OCI-LY7 (cell line): ENCODE measurements at regions of chr18 and their contacts with region 1.

Region 1: DNA sequence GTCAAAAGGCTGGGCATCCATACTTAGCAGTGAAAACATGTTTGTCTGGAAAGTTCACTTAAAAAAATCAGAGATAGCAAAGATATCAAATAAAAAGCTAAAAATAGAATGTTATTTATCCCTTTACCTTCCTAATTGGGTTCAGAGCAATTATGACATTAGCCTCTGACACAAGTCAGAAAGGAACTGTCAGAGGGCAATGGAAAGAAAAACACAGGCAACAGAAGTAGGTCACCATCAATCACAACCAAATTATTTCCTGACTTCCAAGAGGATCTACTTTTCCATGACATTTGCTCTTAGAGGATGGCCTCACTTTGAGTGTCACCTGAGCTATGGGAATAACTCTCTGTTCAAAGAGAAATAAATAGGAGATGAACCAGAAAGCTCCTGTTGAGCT is 27.5 kb downstream of the MYOM1 start:
- DNase-seq: no peak
- H3K4me3 ChIP-seq: no peak overlapping the region
- H3K27ac ChIP-seq: no peak overlapping the region
- H3K4me1 ChIP-seq: peaks cover 11% of the 10 kb centered on the region
- CTCF ChIP-seq: no peak

Region 2: DNA sequence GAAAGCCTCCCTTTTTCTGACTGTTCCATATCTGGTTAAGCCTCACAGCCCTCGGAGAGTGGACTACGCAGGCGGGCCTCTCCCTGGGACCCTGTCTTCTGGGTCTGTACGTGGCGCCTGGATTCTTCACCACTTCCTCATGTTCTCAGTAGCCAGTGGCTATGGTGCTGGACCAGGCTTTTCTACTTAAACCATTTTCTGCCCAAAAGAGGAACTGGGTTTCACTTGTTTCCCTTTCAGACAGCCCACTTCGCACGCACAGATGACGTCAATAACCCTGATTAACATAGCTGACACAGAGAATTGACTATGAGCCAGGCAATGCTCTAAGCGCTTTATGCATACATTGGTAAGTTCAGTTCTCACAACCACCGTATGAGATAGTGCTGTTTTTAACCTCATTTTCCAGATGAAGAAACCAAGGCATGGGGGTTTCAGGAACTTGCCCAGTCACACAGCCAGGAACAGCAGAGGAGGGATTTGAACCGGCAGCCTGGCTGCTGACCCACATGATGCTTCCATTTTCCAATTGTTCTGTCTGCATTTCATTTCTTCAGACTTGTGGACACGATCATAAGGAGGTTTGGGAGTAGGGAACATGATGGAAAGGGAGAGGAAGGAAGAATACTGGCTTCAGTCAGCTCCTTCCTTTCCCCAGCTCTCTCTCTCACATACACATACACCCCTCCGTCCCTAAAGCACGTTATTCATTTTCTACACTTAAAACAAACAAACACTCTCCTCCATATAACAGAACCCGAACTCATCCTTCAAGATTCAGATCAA is 14.2 kb before region 1 on chr18:
- CTCF ChIA-PET with region 1: interaction called, 3 read pairs
- POLR2A ChIA-PET with region 1: interaction called, 12 read pairs
- intact Hi-C with region 1: no loop called
- DNase-seq: peak; percentile 90
- H3K4me3 ChIP-seq: peak overlapping the region; percentile 20
- H3K27ac ChIP-seq: peak overlapping the region; percentile 91
- H3K4me1 ChIP-seq: peaks cover 53% of the 10 kb centered on the region
- CTCF ChIP-seq: no peak

Region 3: DNA sequence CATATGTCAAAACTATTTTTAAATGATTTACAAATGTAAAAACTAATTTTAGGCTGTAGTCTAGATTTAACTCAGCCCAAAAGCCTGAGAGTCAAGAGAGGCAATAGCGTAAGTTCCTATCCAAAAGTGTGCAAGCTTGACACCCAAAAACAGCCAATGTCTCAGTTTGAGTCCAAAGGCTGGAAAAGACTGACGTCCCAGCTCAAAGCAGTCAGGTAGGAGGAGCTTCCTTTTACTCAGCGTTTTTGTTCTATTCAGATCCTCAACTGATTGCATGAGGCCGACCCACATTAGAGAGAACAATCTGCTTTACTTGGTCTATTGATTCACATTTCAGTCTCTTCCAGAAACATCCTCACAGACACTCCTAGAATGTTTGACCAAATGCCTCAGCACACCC is 121.4 kb after region 1 on chr18:
- CTCF ChIA-PET with region 1: no interaction called
- POLR2A ChIA-PET with region 1: no interaction called
- intact Hi-C with region 1: no loop called
- DNase-seq: no peak
- H3K4me3 ChIP-seq: no peak overlapping the region
- H3K27ac ChIP-seq: no peak overlapping the region
- H3K4me1 ChIP-seq: no peaks in the 10 kb centered on the region
- CTCF ChIP-seq: no peak